Naive thymus-derived CD4-positive, alpha-beta T cell (primary cell): ENCODE measurements at regions of chr1 and their contacts with region 1.

Region 1: DNA sequence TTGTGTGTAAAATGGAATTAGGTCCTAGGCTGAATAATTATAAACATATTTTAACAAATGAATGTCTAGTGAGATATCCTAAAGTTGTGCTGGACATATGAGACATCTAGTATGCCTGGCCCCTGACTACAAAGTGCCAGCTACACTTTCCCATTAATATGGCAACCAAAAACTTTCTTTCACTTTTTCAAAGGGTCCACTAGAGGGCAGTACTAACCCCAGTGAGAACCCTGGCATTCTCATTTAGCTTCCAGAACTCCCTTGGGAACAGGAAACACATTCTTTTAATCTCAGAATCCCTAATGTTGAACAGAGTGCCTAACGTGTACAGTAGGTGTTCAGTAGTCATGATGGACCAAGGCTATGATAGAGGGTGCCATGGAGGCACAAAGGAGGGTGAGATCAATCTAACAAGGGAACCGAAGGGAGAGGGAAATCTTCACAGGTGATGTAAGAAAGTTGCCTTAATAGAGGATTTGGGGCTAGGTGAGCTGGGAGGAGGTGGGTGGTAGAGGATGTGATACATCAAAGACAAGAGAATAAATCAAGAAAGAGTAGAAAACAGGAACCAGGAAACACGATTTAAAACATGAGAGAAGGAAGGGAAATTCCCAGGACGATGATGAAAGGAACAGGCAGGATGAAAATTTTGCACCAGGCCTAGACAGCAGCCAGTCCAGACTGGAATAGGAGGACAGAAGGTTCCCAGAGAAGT is 41.6 kb downstream of the NSL1 start:
- DNase-seq: peak in 6 of 9 donors; percentile 3 to 30 (median 14)
- ATAC-seq: peak; percentile 58
- H3K4me3 ChIP-seq: no peak overlapping the region
- H3K4me3 Mint-ChIP-seq: peak overlapping the region; percentile 1 to 69 (median 48)
- H3K27ac ChIP-seq: peak overlapping the region; percentile 56
- H3K27ac Mint-ChIP-seq: peak overlapping the region; percentile 1 to 92 (median 88)
- H3K4me1 ChIP-seq: peaks cover 5 to 36% of the 10 kb centered on the region in 2 donors
- H3K4me1 Mint-ChIP-seq: peaks cover 36 to 73% (median 62%) of the 10 kb centered on the region in 7 donors
- H3K27me3 ChIP-seq: no peaks in the 10 kb centered on the region
- H3K27me3 Mint-ChIP-seq: no peaks in the 10 kb centered on the region

Region 2: DNA sequence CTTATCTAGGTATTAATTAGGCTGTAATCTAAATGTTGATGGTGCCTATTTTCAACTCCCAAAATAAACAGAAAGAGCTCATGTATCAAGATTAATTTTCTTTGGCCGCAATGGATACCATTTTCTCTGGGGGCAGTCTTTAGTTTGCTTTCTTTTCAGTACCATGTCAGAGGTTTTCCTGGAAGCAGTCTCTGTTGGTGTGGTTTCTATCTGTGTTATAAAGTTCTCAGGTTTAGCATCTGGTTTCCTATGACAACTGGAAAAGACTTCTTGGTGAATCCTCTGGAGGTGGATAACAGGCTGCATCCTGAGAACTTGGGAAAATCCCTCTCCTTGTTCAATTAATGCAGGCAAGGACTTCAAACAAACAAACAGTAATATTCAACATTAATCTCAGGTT is 11.6 kb before region 1 on chr1:
- CTCF ChIA-PET with region 1: interaction called, 5 read pairs
- POLR2A ChIA-PET with region 1: interaction called, 21 read pairs
- intact Hi-C with region 1: loop called in 1 of 2 experiments (anchors 1 kb)
- DNase-seq: no peak
- ATAC-seq: no peak
- H3K4me3 ChIP-seq: no peak overlapping the region
- H3K4me3 Mint-ChIP-seq: peak overlapping the region in 1 of 10 donors; percentile 61
- H3K27ac ChIP-seq: no peak overlapping the region
- H3K27ac Mint-ChIP-seq: peak overlapping the region in 1 of 9 donors; percentile 85
- H3K4me1 ChIP-seq: no peaks in the 10 kb centered on the region
- H3K4me1 Mint-ChIP-seq: peaks cover 3 to 29% (median 22%) of the 10 kb centered on the region in 7 donors
- H3K27me3 ChIP-seq: no peaks in the 10 kb centered on the region
- H3K27me3 Mint-ChIP-seq: no peaks in the 10 kb centered on the region

Region 3: DNA sequence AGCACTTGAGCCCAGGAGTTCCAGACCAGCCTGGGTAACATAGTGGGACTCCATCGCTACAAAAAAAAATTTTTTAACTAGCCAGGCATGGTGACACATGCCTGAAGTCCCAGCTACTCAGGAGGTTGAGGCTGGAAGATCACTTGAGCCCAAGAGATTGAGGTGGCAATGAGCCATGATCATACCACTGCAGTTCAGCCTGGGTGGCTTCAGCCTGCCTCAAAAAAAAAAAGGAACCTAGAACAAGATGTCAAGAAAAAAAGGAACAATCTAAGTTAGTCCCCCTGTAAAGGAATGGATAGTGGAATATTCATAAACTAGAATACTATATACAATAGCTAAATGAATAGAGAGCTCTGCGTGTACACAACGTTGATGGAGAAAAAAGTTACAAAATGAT is 27.2 kb after region 1 on chr1:
- CTCF ChIA-PET with region 1: interaction called, 4 read pairs
- POLR2A ChIA-PET with region 1: interaction called, 3 read pairs
- intact Hi-C with region 1: loop called in 1 of 2 experiments (anchors 2 kb)
- DNase-seq: no peak
- ATAC-seq: no peak
- H3K4me3 ChIP-seq: no peak overlapping the region
- H3K4me3 Mint-ChIP-seq: no peak overlapping the region
- H3K27ac ChIP-seq: no peak overlapping the region
- H3K27ac Mint-ChIP-seq: peak overlapping the region in 2 of 9 donors; percentile 13 to 60
- H3K4me1 ChIP-seq: no peaks in the 10 kb centered on the region
- H3K4me1 Mint-ChIP-seq: peaks cover 4 to 33% (median 19%) of the 10 kb centered on the region in 7 donors
- H3K27me3 ChIP-seq: no peaks in the 10 kb centered on the region
- H3K27me3 Mint-ChIP-seq: no peaks in the 10 kb centered on the region